ENCODE measurements at regions of chr16 and their contacts with region 1.

Region 1: DNA sequence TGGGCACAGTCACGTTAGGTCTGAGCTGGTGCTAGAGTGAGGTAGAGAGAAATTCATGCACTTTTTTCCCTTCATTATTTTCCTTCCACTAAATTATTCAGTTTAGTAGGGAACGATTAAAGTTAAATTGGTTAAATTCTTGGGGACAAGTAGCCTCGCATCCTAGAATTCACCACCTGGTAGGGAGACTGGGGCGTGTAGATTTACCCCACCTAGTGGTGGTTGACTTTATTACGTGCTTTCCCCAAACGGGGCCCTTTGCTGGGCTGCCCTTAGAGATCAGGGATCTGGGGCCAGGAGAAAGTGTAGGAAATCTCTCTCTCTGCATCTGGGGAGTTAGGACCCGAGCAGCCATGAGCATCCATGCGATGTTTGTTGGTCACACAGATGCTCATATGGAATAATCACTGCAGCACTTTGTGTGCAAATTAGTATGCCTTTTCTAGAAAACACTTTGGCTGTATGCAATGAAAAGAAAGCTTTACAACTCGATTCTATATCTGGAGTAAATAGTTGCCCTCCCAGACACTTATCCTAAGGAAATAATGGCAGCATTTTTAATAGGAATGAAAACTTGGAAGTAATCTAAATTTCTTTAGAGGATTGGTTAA is 107.0 kb downstream of the PLCG2 start:
- DNase-seq: peak; percentile 47 to 85
- ATAC-seq: peak; percentile 91 to 92
- H3K4me3 ChIP-seq: no peak overlapping the region
- H3K27ac ChIP-seq: no peak overlapping the region
- H3K4me1 ChIP-seq: peaks cover 8% of the 10 kb centered on the region; the same call in 1 of the 3 replicates
- CTCF ChIP-seq: peak; percentile 69
- EP300 ChIP-seq: no peak
- POLR2A ChIP-seq: no peak
- RAD21 ChIP-seq: peak; percentile 40 to 53; a peak in 3 of 5 replicates

Region 2: DNA sequence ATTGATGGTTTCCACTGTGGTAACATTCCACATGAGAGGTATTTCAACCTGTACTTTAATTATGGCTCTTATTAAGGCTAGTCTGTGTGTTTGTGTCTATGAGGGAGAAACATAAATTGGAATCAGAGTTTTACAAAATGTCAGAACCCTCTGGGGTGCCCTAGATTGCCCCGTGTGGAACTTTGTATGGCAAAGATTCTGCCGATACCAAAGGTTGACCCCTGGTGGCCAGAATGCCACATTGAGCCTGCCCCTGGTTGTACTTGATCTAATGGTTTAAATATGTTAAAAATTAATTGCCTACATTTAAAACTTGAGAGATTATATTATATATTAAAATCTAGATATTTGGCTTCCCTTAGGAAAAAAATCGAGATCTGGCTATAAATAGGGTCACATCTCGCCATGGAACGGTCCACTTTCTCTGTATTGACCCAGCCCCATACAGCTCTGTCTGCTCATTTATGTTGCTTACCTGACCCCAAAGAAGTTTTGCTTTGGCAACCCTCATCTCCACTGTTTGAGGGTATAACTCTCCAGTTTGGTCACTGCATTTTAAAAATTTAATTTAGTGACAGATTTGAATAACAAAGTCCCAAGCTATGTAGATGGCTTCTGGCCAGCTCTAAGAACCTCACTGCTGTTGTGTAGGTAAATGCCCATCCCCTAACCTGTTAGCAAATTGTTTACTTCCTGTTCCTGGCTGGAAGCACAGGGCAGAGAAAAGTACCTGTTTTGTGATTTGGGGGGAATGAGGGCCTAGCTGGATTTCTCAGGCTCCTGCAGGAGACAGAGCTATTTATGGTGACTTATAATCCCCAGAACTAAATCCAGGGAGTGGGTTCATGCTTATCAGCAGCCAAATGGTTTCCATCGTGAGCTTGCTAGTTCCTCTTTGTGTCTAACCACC is 12.0 kb before region 1 on chr16:
- CTCF ChIA-PET with region 1: interaction called, 31 read pairs
- POLR2A ChIA-PET with region 1: no interaction called
- DNase-seq: peak; percentile 59 to 72
- ATAC-seq: peak; percentile 91 to 97
- H3K4me3 ChIP-seq: no peak overlapping the region
- H3K27ac ChIP-seq: no peak overlapping the region
- H3K4me1 ChIP-seq: no peaks in the 10 kb centered on the region
- CTCF ChIP-seq: peak; percentile 84
- EP300 ChIP-seq: no peak
- POLR2A ChIP-seq: no peak
- RAD21 ChIP-seq: peak; percentile 66 to 70

Region 3: GRCh38 chr16:81901483-81901882 is 15.4 kb after region 1 on chr16:
- CTCF ChIA-PET with region 1: interaction called, 13 read pairs
- POLR2A ChIA-PET with region 1: no interaction called
- DNase-seq: no peak
- ATAC-seq: no peak
- H3K4me3 ChIP-seq: no peak overlapping the region
- H3K27ac ChIP-seq: no peak overlapping the region
- H3K4me1 ChIP-seq: no peaks in the 10 kb centered on the region
- CTCF ChIP-seq: no peak
- EP300 ChIP-seq: no peak
- POLR2A ChIP-seq: no peak
- RAD21 ChIP-seq: no peak

Region 4: DNA sequence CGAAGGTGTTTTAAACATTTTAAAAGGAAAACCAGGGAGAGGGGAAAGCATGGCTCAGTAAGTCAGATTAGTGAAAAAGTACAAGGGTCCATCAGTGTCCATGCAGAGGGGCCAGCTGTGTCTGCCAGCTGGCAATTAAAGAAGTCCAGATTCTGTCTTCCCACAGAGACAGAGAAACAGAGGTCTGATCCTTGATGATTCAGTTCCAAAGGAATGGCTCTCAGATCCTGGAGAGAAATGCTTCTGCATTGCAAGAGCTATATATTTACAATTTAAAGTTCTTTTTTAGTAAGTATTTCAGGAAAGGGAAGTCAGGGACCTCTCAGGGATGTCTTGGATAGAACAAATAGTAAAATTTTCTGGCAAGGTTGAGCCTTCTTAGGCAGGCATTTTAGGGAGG is 205.2 kb after region 1 on chr16:
- CTCF ChIA-PET with region 1: no interaction called
- POLR2A ChIA-PET with region 1: no interaction called
- DNase-seq: no peak
- ATAC-seq: no peak
- H3K4me3 ChIP-seq: no peak overlapping the region
- H3K27ac ChIP-seq: no peak overlapping the region
- H3K4me1 ChIP-seq: no peaks in the 10 kb centered on the region
- CTCF ChIP-seq: no peak
- EP300 ChIP-seq: no peak
- POLR2A ChIP-seq: no peak
- RAD21 ChIP-seq: no peak

Region 5: GRCh38 chr16:82456683-82457082 is 570.6 kb after region 1 on chr16:
- CTCF ChIA-PET with region 1: interaction called, 10 read pairs
- POLR2A ChIA-PET with region 1: no interaction called
- DNase-seq: peak; percentile 52 to 64
- ATAC-seq: peak; percentile 86 to 98
- H3K4me3 ChIP-seq: no peak overlapping the region
- H3K27ac ChIP-seq: no peak overlapping the region
- H3K4me1 ChIP-seq: no peaks in the 10 kb centered on the region
- CTCF ChIP-seq: peak; percentile 59
- EP300 ChIP-seq: no peak
- POLR2A ChIP-seq: no peak
- RAD21 ChIP-seq: peak; percentile 36 to 46; a peak in 3 of 5 replicates

Measured in A549 (cell line).